ENCODE measurements at regions of chr1 and their contacts with region 1.

Region 1: GRCh38 chr1:6554031-6554906 is at the start of gene NOL9:
- DNase-seq: peak; percentile 93 to 96 (median 95)
- H3K4me3 ChIP-seq: peak within 1 kb of the TSS; percentile 76 to 95 (median 93)
- H3K27ac ChIP-seq: peak within 1 kb of the TSS; percentile 75 to 92
- H3K4me1 ChIP-seq: peaks cover 5 to 19% (median 15%) of the 10 kb centered on the region in 4 experiments
- H3K27me3 ChIP-seq: no peaks in the 10 kb centered on the region

Region 2: GRCh38 chr1:6579374-6580118 is 25.3 kb after region 1 on chr1 and contains the start of gene ZBTB48:
- CTCF ChIA-PET with region 1: interaction called, 11 read pairs
- POLR2A ChIA-PET with region 1: interaction called, 4 read pairs
- DNase-seq: peak; percentile 95 to 96 (median 96)
- H3K4me3 ChIP-seq: peak within 1 kb of the TSS; percentile 64 to 85 (median 76)
- H3K27ac ChIP-seq: peak within 1 kb of the TSS; percentile 81 to 94
- H3K4me1 ChIP-seq: peaks cover 4 to 37% (median 33%) of the 10 kb centered on the region in 4 experiments
- H3K27me3 ChIP-seq: no peaks in the 10 kb centered on the region

Region 3: DNA sequence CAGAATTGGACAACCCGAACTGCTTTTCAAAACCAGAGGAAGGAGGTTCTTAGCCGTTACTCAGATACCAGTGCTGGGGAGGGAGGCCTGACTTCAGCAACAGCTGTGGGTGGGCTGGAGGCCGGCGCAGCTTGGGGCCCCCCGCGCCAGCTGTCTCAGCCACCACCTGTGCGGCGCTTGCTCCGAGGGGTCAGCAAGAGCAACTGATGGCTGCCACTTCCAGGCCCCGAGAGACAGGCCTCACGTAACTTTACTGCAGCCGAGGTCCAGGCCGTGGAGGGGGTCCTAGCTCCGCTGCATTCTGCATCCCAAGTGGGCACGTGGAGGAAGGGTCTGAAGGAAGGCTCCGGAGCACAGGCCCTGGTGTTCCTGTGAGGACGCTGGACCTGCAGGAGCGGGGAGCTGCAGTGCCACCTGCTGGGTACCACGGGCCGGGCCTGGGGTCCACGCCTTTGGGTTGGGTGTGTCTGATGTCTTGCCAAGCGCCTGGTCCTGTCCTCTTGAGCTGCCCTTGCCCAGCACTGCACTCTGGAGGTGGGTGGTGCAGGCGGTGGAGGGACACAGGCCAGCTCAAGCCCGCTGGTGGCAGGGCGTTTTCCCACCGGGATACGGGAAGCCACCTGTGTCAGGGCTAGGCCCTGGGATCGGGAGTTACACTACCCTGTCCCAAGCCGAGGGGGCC is 80.2 kb after region 1 on chr1:
- CTCF ChIA-PET with region 1: interaction called, 21 read pairs
- POLR2A ChIA-PET with region 1: no interaction called
- DNase-seq: peak; percentile 47 to 63 (median 63)
- H3K4me3 ChIP-seq: no peak overlapping the region
- H3K27ac ChIP-seq: no peak overlapping the region
- H3K4me1 ChIP-seq: no peaks in the 10 kb centered on the region
- H3K27me3 ChIP-seq: no peaks in the 10 kb centered on the region

Measured in common myeloid progenitor, CD34-positive (primary cell).